GM13977 (cell line): ENCODE measurements at regions of chr7 and their contacts with region 1.

Region 1: GRCh38 chr7:74401137-74401859 is 52.4 kb upstream of the GTF2IRD1 start:
- DNase-seq: peak; percentile 83
- CTCF ChIP-seq: peak; percentile 88

Region 2: GRCh38 chr7:73769536-73769991 is 631.7 kb before region 1 on chr7:
- in situ Hi-C with region 1: no loop called
- DNase-seq: no peak
- CTCF ChIP-seq: no peak

Region 3: DNA sequence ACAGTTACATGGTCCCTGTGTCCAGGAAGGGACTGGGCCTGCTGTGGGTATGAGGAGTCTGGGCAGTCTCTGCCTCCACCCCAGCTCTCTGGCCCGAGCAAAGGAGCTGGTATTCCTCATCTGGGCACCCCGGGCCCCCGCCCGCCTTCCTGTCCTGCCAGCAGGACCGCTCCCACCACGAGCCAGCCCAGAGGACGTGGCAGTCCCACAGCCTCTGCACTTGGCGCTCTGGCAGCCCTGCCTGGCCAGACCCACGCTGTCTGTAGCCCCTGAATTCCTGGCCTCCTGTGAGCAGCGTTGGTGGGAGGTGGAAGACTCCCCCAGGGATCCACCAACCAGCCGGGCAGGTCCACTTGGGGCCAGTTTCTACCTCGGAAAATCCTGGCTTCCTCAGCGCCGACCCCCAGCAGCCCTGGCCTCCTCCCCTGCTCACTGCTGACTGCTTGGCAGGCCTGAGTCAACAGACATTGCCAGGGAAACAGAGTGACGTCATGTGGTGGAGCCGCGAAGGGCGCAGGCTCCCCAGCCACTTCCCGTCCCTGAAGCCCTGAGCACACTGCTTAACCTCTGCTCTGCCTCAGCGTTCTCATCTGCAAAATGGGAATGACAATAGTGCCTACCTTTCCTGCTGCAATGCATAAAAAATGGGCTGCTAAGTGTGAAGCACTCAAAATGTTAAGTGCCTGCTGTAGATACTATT is 339.3 kb before region 1 on chr7:
- in situ Hi-C with region 1: loop called (anchors 10 kb)
- DNase-seq: peak; percentile 75
- CTCF ChIP-seq: no peak

Region 4: DNA sequence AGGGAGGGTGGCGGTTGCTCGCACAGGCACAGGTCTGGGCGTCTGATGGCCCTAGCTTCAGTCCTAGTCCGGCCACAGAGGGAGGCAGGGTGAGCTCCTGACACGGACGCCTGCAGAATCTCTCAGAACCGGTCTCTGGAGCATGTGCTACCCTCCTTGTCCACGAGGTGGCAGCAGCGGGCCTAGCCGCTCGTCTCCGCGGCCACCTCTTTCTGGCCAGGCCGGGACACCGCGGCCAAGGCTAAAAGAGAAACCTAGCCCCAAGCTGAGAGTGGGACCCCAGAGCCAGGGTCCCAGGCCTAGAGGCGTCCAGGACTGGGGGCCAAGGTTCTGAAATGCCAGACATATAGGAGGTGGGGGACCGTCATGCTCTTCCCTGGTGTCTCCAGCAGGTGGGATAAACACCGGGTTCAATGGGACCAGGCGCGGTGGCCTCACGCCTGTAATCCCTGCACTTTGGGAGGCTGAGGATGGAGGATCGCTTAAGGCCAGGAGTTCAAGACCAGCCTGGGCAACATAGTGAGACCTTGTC is 194.6 kb before region 1 on chr7:
- in situ Hi-C with region 1: loop called (anchors 5 kb)
- DNase-seq: peak; percentile 83
- CTCF ChIP-seq: peak; percentile 94